Endothelial cell of umbilical vein (primary cell): ENCODE measurements at regions of chr19 and their contacts with region 1.

Region 1: GRCh38 chr19:13784731-13785452 is 10.4 kb upstream of the ZSWIM4 start:
- DNase-seq: peak; percentile 62
- H3K4me3 ChIP-seq: no peak overlapping the region
- H3K27ac ChIP-seq: no peak overlapping the region
- H3K4me1 ChIP-seq: peaks cover 27% of the 10 kb centered on the region
- H3K27me3 ChIP-seq: no peaks in the 10 kb centered on the region
- CTCF ChIP-seq: peak; percentile 67 to 85
- POLR2A ChIP-seq: no peak

Region 2: DNA sequence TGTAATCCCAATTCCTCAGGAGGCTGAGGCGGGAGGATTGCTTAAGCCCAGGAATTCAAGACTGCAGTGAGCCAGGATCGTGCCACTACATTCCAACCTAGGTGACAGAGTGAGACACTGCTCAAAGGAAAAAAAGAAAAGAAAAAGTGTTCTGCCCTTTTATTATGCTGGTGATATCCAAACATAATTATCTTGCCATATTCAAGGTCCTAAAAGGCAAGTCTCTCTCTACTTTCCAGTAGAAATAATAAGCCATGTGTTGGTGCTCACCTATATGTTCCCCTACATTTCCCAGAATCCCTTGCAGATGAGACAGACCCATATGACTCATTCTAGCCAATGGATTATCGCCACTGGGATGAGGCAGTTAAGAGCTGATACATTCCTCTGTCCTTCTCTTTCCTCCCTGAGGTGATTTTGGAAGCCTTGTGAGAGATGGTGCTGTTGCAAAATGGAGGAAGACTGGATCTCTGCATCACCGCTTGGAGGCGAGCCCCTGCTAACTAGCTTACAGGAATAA is 78.9 kb before region 1 on chr19:
- CTCF ChIA-PET with region 1: no interaction called
- POLR2A ChIA-PET with region 1: no interaction called
- dilution Hi-C with region 1: no loop called
- intact Hi-C with region 1: no loop called
- DNase-seq: no peak
- H3K4me3 ChIP-seq: no peak overlapping the region
- H3K27ac ChIP-seq: no peak overlapping the region
- H3K4me1 ChIP-seq: no peaks in the 10 kb centered on the region
- H3K27me3 ChIP-seq: peaks cover 0 to 3% of the 10 kb centered on the region in 2 experiments
- CTCF ChIP-seq: no peak
- POLR2A ChIP-seq: no peak

Region 3: GRCh38 chr19:13731147-13731964 is 53.5 kb before region 1 on chr19:
- CTCF ChIA-PET with region 1: no interaction called
- POLR2A ChIA-PET with region 1: no interaction called
- dilution Hi-C with region 1: no loop called
- intact Hi-C with region 1: loop called (anchors 5 kb)
- DNase-seq: peak; percentile 97
- H3K4me3 ChIP-seq: peak overlapping the region; percentile 19 to 75 (median 39)
- H3K27ac ChIP-seq: peak overlapping the region; percentile 98
- H3K4me1 ChIP-seq: peaks cover 23% of the 10 kb centered on the region
- H3K27me3 ChIP-seq: no peaks in the 10 kb centered on the region
- CTCF ChIP-seq: no peak
- POLR2A ChIP-seq: peak; percentile 89

Region 4: GRCh38 chr19:13794757-13795589 is 10.1 kb after region 1 on chr19 and contains the start of gene ZSWIM4:
- CTCF ChIA-PET with region 1: interaction called, 48 read pairs
- POLR2A ChIA-PET with region 1: interaction called, 14 read pairs
- dilution Hi-C with region 1: no loop called
- intact Hi-C with region 1: loop called (anchors 1 kb)
- DNase-seq: peak; percentile 100
- H3K4me3 ChIP-seq: peak within 1 kb of the TSS; percentile 72 to 97 (median 87)
- H3K27ac ChIP-seq: peak within 1 kb of the TSS; percentile 95
- H3K4me1 ChIP-seq: peaks cover 20% of the 10 kb centered on the region
- H3K27me3 ChIP-seq: no peaks in the 10 kb centered on the region
- CTCF ChIP-seq: no peak
- POLR2A ChIP-seq: peak; percentile 5
- total RNA-seq, gene ZSWIM4: 23.1 and 26.6 TPM in 2 replicates

Region 5: GRCh38 chr19:13833330-13834243 is 48.7 kb after region 1 on chr19:
- CTCF ChIA-PET with region 1: interaction called, 12 read pairs
- POLR2A ChIA-PET with region 1: interaction called, 9 read pairs
- dilution Hi-C with region 1: no loop called
- intact Hi-C with region 1: no loop called
- DNase-seq: peak; percentile 91
- H3K4me3 ChIP-seq: no peak overlapping the region
- H3K27ac ChIP-seq: peak overlapping the region; percentile 11
- H3K4me1 ChIP-seq: peaks cover 27% of the 10 kb centered on the region
- H3K27me3 ChIP-seq: no peaks in the 10 kb centered on the region
- CTCF ChIP-seq: peak; percentile 32 to 63
- POLR2A ChIP-seq: peak; percentile 93

Region 6: DNA sequence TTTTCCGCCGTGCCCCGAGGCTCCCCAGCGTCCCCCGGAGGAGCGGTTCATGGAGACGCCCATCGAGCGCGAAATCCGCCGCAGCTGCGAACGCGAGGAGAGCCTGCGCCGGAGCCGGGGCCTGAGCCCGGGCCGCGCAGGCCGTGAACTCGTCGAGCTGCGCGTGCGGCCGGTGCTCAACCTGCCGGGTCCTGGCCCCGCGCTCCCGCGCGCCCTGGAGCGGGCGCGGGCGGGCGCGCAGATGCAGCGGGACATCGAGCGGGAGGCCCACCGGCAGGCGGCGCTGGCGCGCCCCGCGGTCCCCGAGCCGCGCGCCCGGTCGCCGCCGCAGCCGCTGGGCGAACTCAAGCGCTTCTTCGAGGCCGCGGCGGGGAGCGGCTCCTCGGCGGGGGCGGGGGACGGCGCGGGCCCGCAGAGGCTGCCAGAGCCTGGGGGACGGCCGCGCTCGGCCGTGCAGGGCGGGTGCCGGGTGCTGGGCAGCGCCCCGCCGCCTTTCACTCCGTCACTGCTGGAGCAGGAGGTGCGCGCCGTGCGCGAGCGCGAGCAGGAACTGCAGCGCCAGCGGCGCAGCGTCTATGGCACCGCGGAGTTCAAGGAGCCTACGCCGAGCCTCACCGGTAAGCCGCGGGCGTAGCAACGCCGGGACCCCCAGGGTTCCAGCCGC is 288.5 kb after region 1 on chr19:
- CTCF ChIA-PET with region 1: interaction called, 3 read pairs
- POLR2A ChIA-PET with region 1: no interaction called
- dilution Hi-C with region 1: no loop called
- intact Hi-C with region 1: loop called (anchors 5 kb)
- DNase-seq: peak; percentile 59
- H3K4me3 ChIP-seq: peak overlapping the region; percentile 29 to 61 (median 43)
- H3K27ac ChIP-seq: no peak overlapping the region
- H3K4me1 ChIP-seq: peaks cover 26% of the 10 kb centered on the region
- H3K27me3 ChIP-seq: no peaks in the 10 kb centered on the region
- CTCF ChIP-seq: peak; percentile 35 to 60
- POLR2A ChIP-seq: no peak